ENCODE measurements at regions of chr6 and their contacts with region 1.

Region 1: GRCh38 chr6:125114248-125114858 is 39.2 kb upstream of the TPD52L1 start:
- H3K4me3 ChIP-seq: no peak overlapping the region
- H3K27ac ChIP-seq: no peak overlapping the region
- H3K4me1 ChIP-seq: no peaks in the 10 kb centered on the region
- CTCF ChIP-seq: no peak

Region 2: DNA sequence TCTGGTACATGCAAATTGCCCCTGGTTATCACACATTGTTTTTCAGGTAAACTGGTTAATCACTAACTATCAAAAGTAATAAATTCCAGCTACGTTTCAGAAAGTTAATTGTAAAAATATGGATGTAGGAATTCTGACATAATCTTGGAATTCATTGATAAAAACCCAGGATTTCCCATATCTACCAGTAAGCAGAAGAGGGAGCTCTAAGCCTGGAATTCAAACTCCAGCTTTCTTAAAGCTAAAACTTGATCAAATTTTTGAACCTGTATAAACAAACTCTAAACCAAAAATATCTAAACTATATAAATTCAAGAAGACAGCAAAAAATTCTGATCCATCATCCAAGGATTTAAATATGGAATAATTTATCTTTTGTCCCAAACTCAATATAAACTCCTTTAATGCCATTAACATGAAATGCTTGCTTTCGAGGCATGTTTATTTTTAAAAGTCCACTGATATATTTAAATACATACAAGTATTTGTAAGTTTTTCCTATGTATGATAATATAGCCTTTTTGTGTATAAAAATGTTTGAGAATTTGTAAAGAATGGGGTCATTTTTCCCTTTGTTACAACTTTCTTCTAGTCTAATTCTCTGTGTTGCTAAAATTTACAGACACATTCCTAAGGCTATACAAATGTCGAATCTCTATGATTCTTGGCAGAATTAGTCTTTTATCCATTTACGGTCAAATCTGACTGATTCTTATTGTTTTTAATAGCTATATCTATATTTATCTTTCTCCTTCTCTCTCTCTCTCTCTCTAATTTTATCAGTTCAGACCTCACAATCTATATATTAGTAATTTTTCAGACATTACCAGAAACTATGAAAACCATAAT is 243.5 kb before region 1 on chr6:
- CTCF ChIA-PET with region 1: interaction called, 151 read pairs
- POLR2A ChIA-PET with region 1: no interaction called
- H3K4me3 ChIP-seq: no peak overlapping the region
- H3K27ac ChIP-seq: no peak overlapping the region
- H3K4me1 ChIP-seq: no peaks in the 10 kb centered on the region
- CTCF ChIP-seq: no peak

Region 3: GRCh38 chr6:124879110-124880011 is 235.0 kb before region 1 on chr6:
- CTCF ChIA-PET with region 1: interaction called, 151 read pairs
- POLR2A ChIA-PET with region 1: no interaction called
- H3K4me3 ChIP-seq: no peak overlapping the region
- H3K27ac ChIP-seq: no peak overlapping the region
- H3K4me1 ChIP-seq: 0 out of 2 replicates have a peak, but pooled peaks cover 4% of the 10 kb centered on the region
- CTCF ChIP-seq: no peak

Region 4: DNA sequence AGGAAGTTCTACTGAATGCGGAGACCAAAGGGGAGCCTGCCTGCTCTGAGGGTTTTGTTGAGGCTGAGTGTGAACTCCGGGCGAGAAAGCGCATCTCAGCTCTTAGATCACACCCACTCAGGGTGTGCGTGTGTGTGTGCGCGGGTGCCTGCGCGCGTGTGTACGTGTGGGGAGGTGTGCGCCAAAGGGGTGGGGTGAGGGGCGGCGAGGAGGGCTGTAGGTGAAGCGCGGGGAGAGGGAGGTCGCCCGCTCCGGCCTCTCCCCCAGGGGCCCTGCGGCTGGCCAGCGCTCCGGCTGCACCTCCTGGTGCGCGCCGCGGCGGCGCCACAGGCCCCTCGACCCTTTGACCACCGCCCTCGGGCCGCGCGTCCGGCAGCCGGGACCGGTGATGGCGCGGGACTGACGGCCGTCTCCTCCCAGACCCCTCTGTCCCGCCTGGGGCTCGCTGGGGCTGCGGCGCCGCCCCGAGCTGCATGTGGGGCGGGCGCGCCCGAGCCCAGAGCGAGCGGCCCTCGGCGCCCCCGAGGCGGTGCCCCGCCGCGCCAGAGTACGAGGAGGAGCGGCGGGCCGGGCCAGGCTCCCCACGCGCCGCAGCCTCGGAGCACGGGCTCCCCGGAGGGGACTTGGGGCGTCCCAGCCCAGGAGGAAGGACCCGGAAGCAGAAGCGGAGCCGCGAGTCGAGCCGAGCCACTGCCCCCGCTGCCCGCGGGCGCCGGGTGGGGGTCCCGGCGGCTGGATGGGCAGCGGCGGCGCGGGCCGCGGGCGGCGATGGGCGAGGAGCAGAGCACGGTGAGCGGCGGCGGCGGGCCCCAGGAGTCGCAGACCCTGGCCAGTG is 152.4 kb before region 1 on chr6 and contains the start of gene RNF217:
- CTCF ChIA-PET with region 1: interaction called, 26 read pairs
- POLR2A ChIA-PET with region 1: interaction called, 3 read pairs
- H3K4me3 ChIP-seq: peak within 1 kb of the TSS; percentile 89
- H3K27ac ChIP-seq: peak within 1 kb of the TSS; percentile 96
- H3K4me1 ChIP-seq: peaks cover 9% of the 10 kb centered on the region; the same call in 1 of the 2 replicates
- CTCF ChIP-seq: peak; percentile 14; the same call in 1 of the 2 replicates

Region 5: DNA sequence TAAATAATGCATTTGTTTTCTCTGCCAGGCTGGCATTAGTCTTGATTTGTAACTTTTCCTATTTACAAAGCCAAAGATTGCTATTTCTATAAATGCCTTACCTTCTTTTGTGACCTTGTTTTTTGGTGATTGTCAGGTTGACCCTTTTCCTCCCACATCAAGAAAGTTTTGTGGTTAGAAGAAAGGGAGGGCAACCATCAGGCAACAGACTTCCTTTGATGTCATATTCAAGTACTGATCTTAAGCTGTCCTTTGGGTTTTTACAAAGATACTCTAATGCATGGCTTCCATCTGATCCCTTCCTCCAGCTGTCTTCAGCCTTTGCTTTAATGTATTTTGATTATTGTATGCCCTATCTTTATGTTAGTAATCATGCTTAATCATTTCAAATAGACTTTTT is 128.2 kb before region 1 on chr6:
- CTCF ChIA-PET with region 1: interaction called, 13 read pairs
- POLR2A ChIA-PET with region 1: no interaction called
- H3K4me3 ChIP-seq: no peak overlapping the region
- H3K27ac ChIP-seq: no peak overlapping the region
- H3K4me1 ChIP-seq: peaks cover 37% of the 10 kb centered on the region
- CTCF ChIP-seq: no peak

Region 6: DNA sequence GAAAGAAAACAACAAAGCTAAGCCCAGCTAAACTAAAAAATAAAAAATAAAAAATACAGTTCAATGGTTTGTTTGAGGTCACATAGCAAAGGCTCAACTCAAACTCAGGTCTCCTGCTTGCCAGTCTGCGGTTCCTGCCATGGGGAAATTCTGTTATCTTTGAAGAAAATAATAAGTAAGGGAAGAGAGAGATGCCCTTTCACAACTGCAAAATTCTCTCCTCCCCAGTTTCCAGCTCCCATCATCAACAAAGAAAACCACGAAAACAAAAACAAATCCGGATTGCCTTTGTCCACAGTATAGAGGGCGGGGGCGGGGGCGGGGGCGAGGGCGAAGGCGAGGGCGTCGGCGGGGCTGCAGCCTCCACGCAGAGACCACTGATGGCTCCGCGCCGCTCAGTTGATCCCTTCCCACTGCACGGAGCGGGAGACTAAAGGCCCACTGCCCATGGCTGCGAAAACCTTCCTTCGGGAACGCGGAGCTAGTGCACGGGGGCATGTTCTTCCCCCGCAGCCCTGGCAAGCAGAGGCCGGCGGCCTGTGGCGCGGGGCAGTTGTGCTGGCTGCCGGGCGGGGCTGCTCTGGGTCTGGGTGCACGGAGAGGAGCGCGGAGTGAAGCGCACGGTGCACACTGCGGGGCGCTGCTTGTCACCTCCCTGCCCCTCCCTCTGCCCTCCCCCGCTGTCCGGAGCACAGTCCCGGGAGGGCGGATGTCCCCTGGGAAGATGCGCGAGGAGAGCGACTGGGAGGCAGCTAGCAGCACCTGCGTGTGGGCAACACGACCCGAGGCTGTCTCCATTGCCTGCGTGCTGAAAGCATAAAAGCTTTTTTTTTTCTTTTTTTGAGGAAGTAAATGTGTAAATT is 14.9 kb before region 1 on chr6:
- CTCF ChIA-PET with region 1: interaction called, 28 read pairs
- POLR2A ChIA-PET with region 1: interaction called, 3 read pairs
- H3K4me3 ChIP-seq: peak overlapping the region; percentile 72
- H3K27ac ChIP-seq: peak overlapping the region; percentile 57; the same call in 1 of the 2 replicates
- H3K4me1 ChIP-seq: peaks cover 3% of the 10 kb centered on the region
- CTCF ChIP-seq: peak; percentile 96

Region 7: DNA sequence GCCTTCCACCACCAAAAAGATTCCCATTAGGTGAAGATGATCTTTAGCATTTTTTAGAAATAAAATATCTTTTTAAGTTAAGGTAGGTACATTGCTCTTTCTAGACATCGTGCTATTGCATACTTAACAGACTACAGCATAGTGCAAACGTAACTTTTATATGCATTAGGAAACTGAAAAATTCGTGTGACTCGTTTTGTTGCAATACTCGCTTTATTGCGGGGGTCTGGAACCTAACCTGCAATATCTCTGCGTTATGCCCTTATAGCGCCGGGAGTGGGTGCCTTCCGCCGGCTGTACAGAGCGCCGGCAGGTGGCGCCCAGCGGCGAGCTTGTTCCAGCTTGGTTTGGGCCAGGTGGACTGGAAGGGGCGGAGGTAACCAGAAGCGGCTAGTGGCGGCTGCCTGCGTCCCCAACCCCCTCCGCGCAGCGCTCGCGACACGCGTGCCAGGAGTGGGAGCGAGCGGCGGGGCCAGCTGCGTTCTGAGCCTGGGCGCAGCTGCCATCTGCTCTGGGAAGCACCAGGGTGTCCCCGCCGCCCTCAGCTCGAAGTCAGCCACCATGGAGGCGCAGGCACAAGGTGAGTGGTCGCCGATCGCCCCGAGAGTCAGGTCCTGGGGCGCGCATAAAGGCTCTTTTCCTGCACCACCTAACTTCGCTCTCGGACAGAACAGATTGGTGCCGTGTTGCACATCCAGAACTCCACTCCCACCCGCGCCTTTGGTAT is 39.2 kb after region 1 on chr6 and contains the start of gene TPD52L1:
- CTCF ChIA-PET with region 1: interaction called, 15 read pairs
- POLR2A ChIA-PET with region 1: no interaction called
- H3K4me3 ChIP-seq: peak within 1 kb of the TSS; percentile 73
- H3K27ac ChIP-seq: peak within 1 kb of the TSS; percentile 58; the same call in 1 of the 2 replicates
- H3K4me1 ChIP-seq: no peaks in the 10 kb centered on the region; the same call in 1 of the 2 replicates
- CTCF ChIP-seq: peak; percentile 97

Measured in HEK293 (cell line).